ENCODE measurements at regions of chr1 and their contacts with region 1.

Region 1: DNA sequence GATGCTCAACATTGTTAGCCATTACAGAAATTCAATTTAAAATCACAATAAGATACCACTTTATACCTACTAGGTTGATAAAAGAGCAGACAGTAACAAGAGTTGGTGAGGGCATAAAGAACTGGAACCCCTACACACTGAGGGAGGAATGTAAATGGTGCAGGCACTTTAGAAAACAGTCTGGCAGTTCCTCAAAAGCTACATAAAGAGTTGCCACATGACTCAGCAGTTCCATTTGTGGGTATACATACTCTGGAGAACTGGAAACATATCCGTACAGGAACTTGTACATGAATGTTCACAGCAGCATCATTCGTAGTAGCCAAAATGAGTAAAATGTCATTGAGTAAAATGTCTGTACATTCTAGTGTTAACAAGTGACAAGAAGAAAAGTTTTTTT is 17.0 kb downstream of the NSL1 start:
- DNase-seq: no peak
- CTCF ChIP-seq: no peak

Region 2: DNA sequence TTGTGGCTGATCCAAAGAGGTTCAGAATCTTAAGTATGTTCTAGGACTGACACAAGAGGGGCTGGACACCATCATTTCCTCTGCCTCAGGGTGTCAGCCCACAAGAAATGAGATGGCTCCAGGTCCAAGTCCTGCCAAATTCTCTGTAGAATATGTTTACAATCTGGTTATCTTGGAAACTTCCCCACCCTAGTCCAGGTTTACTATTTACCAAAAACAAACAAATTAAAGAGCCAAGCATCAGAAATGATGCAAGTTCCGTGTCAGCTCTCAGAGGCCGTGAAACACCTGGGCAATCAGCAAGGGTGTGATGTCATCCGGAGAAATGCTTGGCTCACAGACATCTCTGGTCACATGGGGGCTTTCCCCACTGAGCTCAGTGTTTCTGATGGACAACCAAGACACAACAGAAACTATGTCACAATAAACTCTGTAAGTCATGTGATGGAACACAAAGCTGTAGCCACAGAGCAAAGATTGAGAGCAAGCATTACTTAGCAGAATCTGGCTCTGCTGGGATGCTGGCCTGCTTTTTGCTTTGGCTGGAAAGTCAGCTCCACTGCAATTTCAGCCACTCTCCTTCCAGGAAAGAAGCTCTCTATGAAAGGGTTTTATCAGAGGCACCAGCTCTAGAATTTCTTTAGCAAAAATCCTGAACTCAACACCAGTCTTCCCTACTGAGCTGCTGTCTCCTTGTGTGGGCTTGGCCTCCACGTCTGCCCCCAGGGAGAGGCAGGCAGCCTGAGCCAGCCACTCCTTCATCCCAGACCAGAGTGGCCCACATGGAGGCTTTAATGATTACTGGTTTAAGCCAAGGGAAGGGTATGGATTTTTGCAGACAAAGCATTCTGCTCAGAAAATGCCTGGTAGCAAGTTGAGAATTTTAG is 285.9 kb before region 1 on chr1:
- in situ Hi-C with region 1: loop called (anchors 10 kb)
- DNase-seq: peak; percentile 81
- CTCF ChIP-seq: no peak